ENCODE measurements at regions of chr4 and their contacts with region 1.

Region 1: DNA sequence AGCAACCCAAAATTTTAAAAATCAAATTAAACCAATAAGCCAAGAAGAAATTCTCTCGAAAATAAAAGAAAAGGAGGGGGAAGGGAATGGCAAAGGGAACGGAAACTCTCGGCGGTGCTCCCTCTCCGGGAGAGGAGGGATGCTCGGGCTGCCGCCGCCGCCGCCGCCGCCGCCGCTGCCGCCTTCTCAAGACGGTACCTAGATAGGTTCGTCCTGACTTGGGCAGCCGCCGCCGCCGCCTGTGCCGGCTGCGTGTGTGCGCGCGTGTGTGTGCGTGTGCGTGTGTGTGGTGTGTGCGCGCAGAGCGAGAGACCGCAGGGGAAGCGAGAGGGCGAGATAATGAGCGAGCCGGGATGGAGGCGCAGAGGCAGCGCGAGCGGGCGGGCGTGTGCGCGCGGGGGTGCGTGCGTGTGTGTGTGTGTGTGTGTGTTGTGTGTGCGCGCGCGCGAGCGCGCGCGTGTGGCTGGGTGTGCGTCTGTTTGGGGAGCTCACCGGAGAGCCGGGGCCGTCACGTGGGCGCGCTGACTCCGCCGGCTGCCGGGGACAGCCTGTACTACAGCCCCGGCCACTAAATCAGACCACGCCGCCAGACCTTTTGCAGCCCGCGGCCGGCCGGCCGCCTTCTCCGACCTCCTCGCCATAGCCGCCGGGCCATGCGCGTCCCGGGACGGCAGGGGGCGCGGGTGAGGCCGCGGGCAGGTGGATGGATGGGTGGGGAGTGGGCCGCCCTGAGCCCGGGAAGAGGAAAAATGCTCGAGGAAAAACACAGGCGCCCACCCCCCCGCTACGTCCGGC is 111.6 kb downstream of the DHX15 start:
- DNase-seq: peak; percentile 63 to 87
- H3K4me3 ChIP-seq: peak overlapping the region; percentile 66 to 80 (median 76)
- H3K27ac ChIP-seq: peak overlapping the region; percentile 28; the same call in 1 of the 2 replicates
- H3K4me1 ChIP-seq: peaks cover 6 to 15% (median 13%) of the 10 kb centered on the region in 4 experiments
- H3K27me3 ChIP-seq: peaks cover 0 to 17% (median 8%) of the 10 kb centered on the region in 4 experiments; a peak in 6 of 7 replicates
- CTCF ChIP-seq: peak; percentile 78 to 90 (median 79)
- EP300 ChIP-seq: 0 out of 3 replicates have a peak, but pooled peaks of 1 of the 2 experiments have one; percentile 26
- POLR2A ChIP-seq: peak in 1 of 2 experiments; percentile 62; a peak in 2 of 3 replicates
- RAD21 ChIP-seq: peak; percentile 42 to 64

Region 2: DNA sequence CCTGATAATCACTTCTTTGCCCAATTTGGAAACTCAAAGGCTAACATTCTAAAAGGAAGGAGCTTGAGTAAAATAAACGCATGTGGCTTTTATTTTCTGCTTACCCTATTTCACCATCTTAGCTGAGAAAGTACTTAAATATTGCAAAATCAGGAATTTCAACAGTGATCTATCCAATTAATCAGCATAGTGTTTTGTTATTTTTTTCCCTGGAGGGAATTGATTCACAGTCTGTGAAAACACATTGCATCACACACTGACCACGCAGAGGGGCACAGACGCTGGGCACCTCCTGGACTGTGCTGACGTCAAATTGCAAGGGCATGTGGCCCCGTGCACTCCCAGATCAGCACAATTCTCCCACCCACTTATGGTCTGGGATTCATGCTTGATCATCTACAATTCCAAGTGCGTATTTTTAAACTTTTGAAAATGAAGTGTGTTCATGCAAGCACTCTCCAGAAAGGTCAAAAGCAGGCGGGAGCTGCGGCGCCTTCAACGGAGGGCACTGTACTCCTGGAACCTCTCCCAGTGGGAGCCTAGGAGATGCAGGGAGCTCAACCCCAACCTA is 262.3 kb before region 1 on chr4:
- CTCF ChIA-PET with region 1: no interaction called
- POLR2A ChIA-PET with region 1: no interaction called
- DNase-seq: no peak
- H3K4me3 ChIP-seq: no peak overlapping the region
- H3K27ac ChIP-seq: no peak overlapping the region
- H3K4me1 ChIP-seq: peaks cover 0 to 3% (median 0%) of the 10 kb centered on the region in 4 experiments; a peak in 2 of 7 replicates
- H3K27me3 ChIP-seq: no peaks in the 10 kb centered on the region
- CTCF ChIP-seq: no peak
- EP300 ChIP-seq: no peak
- POLR2A ChIP-seq: no peak
- RAD21 ChIP-seq: no peak

Region 3: DNA sequence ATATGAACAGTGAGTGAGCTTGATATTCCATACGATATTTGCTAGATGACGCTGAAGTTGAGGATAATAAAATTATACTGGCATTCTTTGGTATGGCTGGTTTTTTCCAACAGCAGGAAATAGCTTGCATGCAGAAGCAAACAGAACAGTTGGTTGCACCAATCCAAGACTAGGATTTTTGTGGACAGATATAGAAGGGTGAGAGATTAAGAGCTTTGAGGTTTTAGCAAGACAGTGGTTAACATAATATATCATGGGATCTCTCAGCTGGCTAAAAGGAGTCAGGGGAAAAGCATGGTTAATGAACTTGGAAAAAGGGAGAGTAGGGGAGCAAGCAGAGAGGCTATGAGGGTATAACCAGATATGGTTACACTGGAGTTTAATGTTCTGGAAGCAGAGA is 16.3 kb before region 1 on chr4:
- CTCF ChIA-PET with region 1: interaction called, 7 read pairs
- POLR2A ChIA-PET with region 1: interaction called, 19 read pairs
- DNase-seq: no peak
- H3K4me3 ChIP-seq: no peak overlapping the region
- H3K27ac ChIP-seq: no peak overlapping the region
- H3K4me1 ChIP-seq: no peaks in the 10 kb centered on the region
- H3K27me3 ChIP-seq: no peaks in the 10 kb centered on the region; a peak in 1 of 7 replicates
- CTCF ChIP-seq: no peak
- EP300 ChIP-seq: no peak
- POLR2A ChIP-seq: no peak
- RAD21 ChIP-seq: no peak

Region 4: GRCh38 chr4:24488399-24489164 is 15.9 kb after region 1 on chr4:
- CTCF ChIA-PET with region 1: interaction called, 71 read pairs
- POLR2A ChIA-PET with region 1: interaction called, 6 read pairs
- DNase-seq: peak in 1 of 2 experiments; percentile 98
- H3K4me3 ChIP-seq: no peak overlapping the region
- H3K27ac ChIP-seq: no peak overlapping the region
- H3K4me1 ChIP-seq: peaks cover 0 to 3% (median 0%) of the 10 kb centered on the region in 4 experiments; a peak in 3 of 7 replicates
- H3K27me3 ChIP-seq: peaks cover 0 to 1% (median 0%) of the 10 kb centered on the region in 4 experiments; a peak in 1 of 7 replicates
- CTCF ChIP-seq: peak; percentile 86 to 97 (median 96)
- EP300 ChIP-seq: no peak
- POLR2A ChIP-seq: no peak
- RAD21 ChIP-seq: peak; percentile 89 to 91

Region 5: DNA sequence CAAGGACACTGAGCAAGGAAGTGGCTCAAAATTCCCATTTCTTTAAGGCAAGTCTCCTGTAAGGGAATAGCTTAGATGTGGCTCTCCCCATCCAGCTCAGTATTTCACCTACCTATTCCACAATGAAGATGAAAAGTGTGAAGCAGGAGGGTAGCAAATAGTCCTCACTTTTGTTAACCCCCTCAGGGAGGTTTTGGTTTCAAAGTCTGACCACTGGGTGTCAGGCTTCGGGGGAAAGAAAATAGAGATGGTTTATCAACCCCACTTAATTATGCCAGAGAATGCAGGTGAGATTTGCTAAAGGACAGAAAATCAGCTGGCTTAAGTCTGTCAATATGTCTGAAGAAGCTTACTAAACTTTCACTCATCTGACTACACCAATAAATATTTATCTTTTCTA is 42.1 kb after region 1 on chr4:
- CTCF ChIA-PET with region 1: interaction called, 8 read pairs
- POLR2A ChIA-PET with region 1: interaction called, 28 read pairs
- DNase-seq: no peak
- H3K4me3 ChIP-seq: no peak overlapping the region
- H3K27ac ChIP-seq: no peak overlapping the region
- H3K4me1 ChIP-seq: peaks cover 9 to 17% (median 14%) of the 10 kb centered on the region in 4 experiments; a peak in 6 of 7 replicates
- H3K27me3 ChIP-seq: no peaks in the 10 kb centered on the region
- CTCF ChIP-seq: peak in 2 of 3 experiments; percentile 40 to 48; a peak in 3 of 4 replicates
- EP300 ChIP-seq: no peak
- POLR2A ChIP-seq: no peak; a peak in 1 of 3 replicates
- RAD21 ChIP-seq: peak; percentile 34 to 40; a peak in 3 of 4 replicates

Region 6: GRCh38 chr4:24551492-24552289 is 79.0 kb after region 1 on chr4:
- CTCF ChIA-PET with region 1: interaction called, 12 read pairs
- POLR2A ChIA-PET with region 1: interaction called, 3 read pairs
- DNase-seq: no peak
- H3K4me3 ChIP-seq: no peak overlapping the region
- H3K27ac ChIP-seq: no peak overlapping the region
- H3K4me1 ChIP-seq: peaks cover 3 to 14% (median 6%) of the 10 kb centered on the region in 4 experiments; a peak in 5 of 7 replicates
- H3K27me3 ChIP-seq: no peaks in the 10 kb centered on the region
- CTCF ChIP-seq: no peak
- EP300 ChIP-seq: no peak
- POLR2A ChIP-seq: no peak
- RAD21 ChIP-seq: no peak

Region 7: DNA sequence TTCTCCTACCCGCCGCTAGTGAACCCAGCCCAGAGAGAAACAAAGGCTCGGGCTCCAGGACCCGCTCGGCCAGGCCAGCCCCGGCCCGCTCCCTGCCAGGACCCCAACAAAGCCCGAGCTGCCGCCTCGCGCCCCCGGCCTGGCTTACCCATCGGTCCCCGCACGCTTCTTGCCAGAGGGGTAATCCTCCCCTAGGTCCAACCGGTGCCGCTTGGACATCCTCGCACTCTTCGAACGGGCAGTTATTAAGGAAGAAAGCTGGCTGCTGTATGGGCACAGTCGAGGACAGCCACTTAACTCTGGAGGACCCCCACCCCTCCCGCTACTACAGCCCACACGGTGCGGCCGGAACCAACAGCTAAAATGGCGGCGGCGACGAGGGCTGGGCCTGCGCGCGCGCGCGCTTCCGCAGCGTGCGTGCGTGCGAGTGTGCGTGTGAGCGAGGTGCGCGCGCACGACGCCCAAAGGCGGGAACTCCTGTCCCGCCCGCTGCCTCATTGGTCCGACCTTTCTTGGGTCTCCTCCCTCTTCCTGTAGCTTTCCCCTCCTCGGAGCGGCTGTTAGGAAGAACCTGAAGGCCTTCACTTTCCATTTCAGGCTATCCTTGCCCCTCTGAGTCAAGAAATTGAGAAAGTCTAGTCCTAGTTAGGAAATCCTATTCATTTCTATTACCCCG is 111.6 kb after region 1 on chr4 and contains the start of gene DHX15:
- CTCF ChIA-PET with region 1: no interaction called
- POLR2A ChIA-PET with region 1: interaction called, 13 read pairs
- DNase-seq: peak; percentile 91 to 95
- H3K4me3 ChIP-seq: peak within 1 kb of the TSS; percentile 88 to 98 (median 96)
- H3K27ac ChIP-seq: peak within 1 kb of the TSS; percentile 99
- H3K4me1 ChIP-seq: peaks cover 0 to 8% (median 0%) of the 10 kb centered on the region in 4 experiments; a peak in 2 of 7 replicates
- H3K27me3 ChIP-seq: no peaks in the 10 kb centered on the region
- CTCF ChIP-seq: no peak
- EP300 ChIP-seq: no peak
- POLR2A ChIP-seq: peak; percentile 90 to 96
- RAD21 ChIP-seq: no peak
- total RNA-seq, gene DHX15: 264 and 286 TPM in 2 replicates

Measured in H1 (cell line).